Caco-2 (cell line): ENCODE measurements at regions of chr18 and their contacts with region 1.

Region 1: GRCh38 chr18:3771121-3771971 is 321.4 kb downstream of the TGIF1 start:
- DNase-seq: peak; percentile 77 to 93
- H3K4me3 ChIP-seq: peak overlapping the region; percentile 30
- H3K4me3 Mint-ChIP-seq: peak overlapping the region; percentile 65
- H3K27ac Mint-ChIP-seq: no peak overlapping the region
- H3K4me1 ChIP-seq: peaks cover 25% of the 10 kb centered on the region
- H3K4me1 Mint-ChIP-seq: peaks cover 17% of the 10 kb centered on the region
- H3K27me3 ChIP-seq: no peaks in the 10 kb centered on the region
- H3K27me3 Mint-ChIP-seq: no peaks in the 10 kb centered on the region
- CTCF ChIP-seq: peak; percentile 91 to 92

Region 2: DNA sequence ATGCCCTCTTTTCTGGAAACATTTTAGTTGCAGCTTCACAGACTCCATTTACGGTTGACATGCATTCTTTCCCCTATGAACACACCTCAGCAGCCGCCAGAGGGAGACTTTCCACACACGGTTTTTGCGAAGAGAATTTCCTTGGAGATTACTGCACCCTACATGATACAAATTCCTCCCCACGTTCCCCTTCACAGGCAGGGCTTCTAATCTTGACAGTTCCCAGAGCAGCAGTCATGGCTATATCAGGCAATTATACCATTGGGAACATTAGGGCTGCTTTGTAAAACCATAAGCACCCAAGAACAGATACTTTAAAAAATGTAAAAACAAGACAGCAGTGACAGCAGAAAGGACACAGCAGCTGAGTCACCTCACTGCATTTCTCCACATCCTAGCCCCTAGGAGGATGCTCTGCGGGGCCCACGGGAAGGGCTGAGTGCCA is 67.6 kb before region 1 on chr18:
- CTCF ChIA-PET with region 1: interaction called, 10 read pairs
- POLR2A ChIA-PET with region 1: no interaction called
- intact Hi-C with region 1: loop called (anchors 1 kb)
- DNase-seq: peak; percentile 67 to 76
- H3K4me3 ChIP-seq: no peak overlapping the region
- H3K4me3 Mint-ChIP-seq: no peak overlapping the region
- H3K27ac Mint-ChIP-seq: no peak overlapping the region
- H3K4me1 ChIP-seq: no peaks in the 10 kb centered on the region
- H3K4me1 Mint-ChIP-seq: peaks cover 17% of the 10 kb centered on the region
- H3K27me3 ChIP-seq: no peaks in the 10 kb centered on the region
- H3K27me3 Mint-ChIP-seq: no peaks in the 10 kb centered on the region
- CTCF ChIP-seq: peak; percentile 81 to 88

Region 3: DNA sequence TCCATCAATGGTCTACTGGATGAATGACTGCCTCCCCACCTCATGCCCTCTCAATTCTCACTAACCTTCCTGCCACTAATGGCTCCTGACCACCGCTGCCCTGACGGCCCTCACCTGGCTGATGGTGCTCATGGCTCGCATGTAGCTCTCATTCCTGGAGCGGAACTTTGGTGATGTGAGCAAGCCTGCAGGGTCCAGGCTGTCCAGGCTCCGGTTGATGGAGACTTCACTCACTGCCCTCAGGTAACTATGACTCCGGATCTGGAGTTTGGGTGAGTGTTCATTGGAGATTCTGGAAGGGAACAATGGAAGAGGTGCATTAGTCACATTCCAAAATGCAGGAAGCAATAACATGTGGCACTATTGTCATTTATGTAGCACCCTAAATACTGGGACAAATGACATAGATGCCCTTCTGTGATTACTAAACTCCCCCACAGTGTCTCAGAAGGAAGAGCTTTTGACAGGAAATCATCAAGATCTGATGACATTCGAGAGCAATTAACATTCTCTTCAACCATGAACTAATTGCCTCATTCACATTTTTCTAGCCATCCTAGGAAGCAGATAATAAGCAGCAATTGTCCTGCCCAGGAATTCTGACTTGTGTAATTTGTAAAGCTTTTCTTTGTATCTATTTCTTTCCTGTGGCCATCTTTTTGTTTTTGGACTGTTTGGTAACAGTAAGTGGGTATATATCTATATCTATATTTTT is 29.0 kb before region 1 on chr18:
- CTCF ChIA-PET with region 1: no interaction called
- POLR2A ChIA-PET with region 1: no interaction called
- intact Hi-C with region 1: no loop called
- DNase-seq: no peak
- H3K4me3 ChIP-seq: no peak overlapping the region
- H3K4me3 Mint-ChIP-seq: no peak overlapping the region
- H3K27ac Mint-ChIP-seq: no peak overlapping the region
- H3K4me1 ChIP-seq: no peaks in the 10 kb centered on the region
- H3K4me1 Mint-ChIP-seq: no peaks in the 10 kb centered on the region
- H3K27me3 ChIP-seq: no peaks in the 10 kb centered on the region
- H3K27me3 Mint-ChIP-seq: peaks cover 3% of the 10 kb centered on the region
- CTCF ChIP-seq: no peak

Region 4: GRCh38 chr18:3816610-3817363 is 45.4 kb after region 1 on chr18:
- CTCF ChIA-PET with region 1: interaction called, 4 read pairs
- POLR2A ChIA-PET with region 1: interaction called, 14 read pairs
- intact Hi-C with region 1: no loop called
- DNase-seq: peak in 1 of 2 experiments; percentile 60
- H3K4me3 ChIP-seq: no peak overlapping the region
- H3K4me3 Mint-ChIP-seq: no peak overlapping the region
- H3K27ac Mint-ChIP-seq: peak overlapping the region; percentile 75
- H3K4me1 ChIP-seq: peaks cover 15% of the 10 kb centered on the region
- H3K4me1 Mint-ChIP-seq: peaks cover 22% of the 10 kb centered on the region
- H3K27me3 ChIP-seq: no peaks in the 10 kb centered on the region
- H3K27me3 Mint-ChIP-seq: no peaks in the 10 kb centered on the region
- CTCF ChIP-seq: no peak

Region 5: GRCh38 chr18:3906116-3906750 is 134.9 kb after region 1 on chr18:
- CTCF ChIA-PET with region 1: interaction called, 15 read pairs
- POLR2A ChIA-PET with region 1: no interaction called
- intact Hi-C with region 1: no loop called
- DNase-seq: peak in 1 of 2 experiments; percentile 53
- H3K4me3 ChIP-seq: no peak overlapping the region
- H3K4me3 Mint-ChIP-seq: peak overlapping the region; percentile 33
- H3K27ac Mint-ChIP-seq: peak overlapping the region; percentile 69
- H3K4me1 ChIP-seq: peaks cover 28% of the 10 kb centered on the region
- H3K4me1 Mint-ChIP-seq: peaks cover 15% of the 10 kb centered on the region
- H3K27me3 ChIP-seq: no peaks in the 10 kb centered on the region
- H3K27me3 Mint-ChIP-seq: peaks cover under 1% of the 10 kb centered on the region
- CTCF ChIP-seq: no peak

Region 6: DNA sequence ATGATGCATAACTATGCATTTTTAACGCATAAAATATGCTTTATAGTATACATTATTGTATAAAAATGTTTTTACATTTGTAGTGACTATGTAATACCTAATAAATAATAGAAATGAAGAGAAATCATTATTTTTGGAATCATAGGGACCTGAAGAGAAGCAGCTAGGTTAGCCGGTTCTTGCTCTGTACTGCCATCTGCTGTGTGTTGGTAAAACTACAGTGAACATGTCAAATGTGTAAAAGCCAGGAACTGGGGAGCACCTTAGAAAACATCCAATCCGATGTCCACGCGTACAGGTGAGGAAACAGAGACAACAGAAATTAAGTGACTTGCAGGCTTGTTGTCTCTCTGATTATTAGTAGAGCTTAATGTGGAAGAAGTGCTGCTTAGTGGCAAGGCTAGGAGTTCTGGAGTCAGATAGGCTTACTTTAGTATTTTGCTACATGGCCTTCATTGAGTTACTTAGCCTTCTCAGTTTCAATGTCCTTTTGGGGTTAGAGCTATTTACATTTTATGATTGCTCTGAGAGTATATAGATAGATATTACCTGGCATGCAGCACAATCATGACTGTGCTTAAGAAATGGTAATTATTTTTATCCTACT is 297.3 kb after region 1 on chr18:
- CTCF ChIA-PET with region 1: interaction called, 8 read pairs
- POLR2A ChIA-PET with region 1: no interaction called
- intact Hi-C with region 1: loop called (anchors 1 kb)
- DNase-seq: peak; percentile 49 to 69
- H3K4me3 ChIP-seq: no peak overlapping the region
- H3K4me3 Mint-ChIP-seq: no peak overlapping the region
- H3K27ac Mint-ChIP-seq: no peak overlapping the region
- H3K4me1 ChIP-seq: no peaks in the 10 kb centered on the region
- H3K4me1 Mint-ChIP-seq: no peaks in the 10 kb centered on the region
- H3K27me3 ChIP-seq: no peaks in the 10 kb centered on the region
- H3K27me3 Mint-ChIP-seq: peaks cover 7% of the 10 kb centered on the region
- CTCF ChIP-seq: peak; percentile 73